ENCODE measurements at regions of chr2 and their contacts with region 1.

Region 1: DNA sequence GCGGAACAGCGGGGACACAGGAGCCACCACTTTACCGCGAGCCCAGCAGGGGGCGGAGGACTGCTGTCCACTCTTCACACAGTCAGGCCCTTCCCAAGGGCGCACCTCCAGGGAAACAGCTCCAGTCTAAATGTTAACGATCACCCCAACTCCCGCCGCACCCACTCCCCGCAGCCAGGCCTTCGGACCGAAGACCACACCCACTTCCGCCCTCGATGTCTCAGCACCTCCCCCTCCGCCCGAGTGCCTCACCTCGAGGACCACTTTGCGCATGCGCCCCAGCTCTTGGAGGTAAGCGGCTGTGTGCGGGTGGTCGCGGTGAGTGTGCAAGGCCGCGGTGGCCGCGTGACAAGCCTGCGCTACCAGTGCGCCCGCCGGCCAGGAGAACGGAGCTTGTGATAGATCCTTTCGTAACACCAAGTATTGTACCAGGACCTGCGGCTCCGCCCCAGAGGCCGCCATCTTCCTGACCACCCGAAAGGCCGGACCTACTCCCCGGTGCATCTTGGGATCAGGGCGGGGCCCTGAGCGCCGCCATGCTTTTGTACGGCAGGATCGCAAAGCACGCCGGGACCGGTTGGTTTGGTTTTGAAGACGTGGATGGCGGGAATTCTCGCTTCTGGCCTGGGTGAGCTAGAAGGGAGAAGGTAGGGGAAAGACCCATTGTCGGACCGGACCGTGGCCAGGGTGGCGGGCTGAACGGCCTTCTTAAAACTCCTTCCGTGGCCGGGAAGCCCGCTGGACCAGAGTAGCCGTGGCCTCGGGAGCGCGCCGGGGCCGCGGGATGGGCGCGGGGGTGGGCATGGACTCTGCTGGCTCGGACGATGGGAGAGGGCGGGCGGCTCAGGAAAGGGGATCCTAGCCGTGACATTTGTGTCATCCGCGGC is at the starts of genes CENPO and PTRHD1:
- DNase-seq: peak; percentile 93 to 95
- ATAC-seq: peak; percentile 97 to 98
- H3K4me3 ChIP-seq: peak within 1 kb of the TSS; percentile 67 to 94 (median 88)
- H3K27ac ChIP-seq: peak within 1 kb of the TSS; percentile 95 to 99 (median 98)
- H3K4me1 ChIP-seq: peaks cover 16 to 17% of the 10 kb centered on the region in 2 donors
- H3K27me3 ChIP-seq: no peaks in the 10 kb centered on the region
- CTCF ChIP-seq: peak; percentile 57 to 72 (median 66)
- POLR2A ChIP-seq: peak; percentile 31 to 36
- total RNA-seq, gene CENPO: 1.2 to 3.6 (median 2.7) TPM
- total RNA-seq, gene PTRHD1: 17.3 to 45.0 (median 37.3) TPM

Region 2: GRCh38 chr2:24123195-24123921 is 669.8 kb before region 1 on chr2 and contains the starts of genes FAM228B and PFN4:
- in situ Hi-C with region 1: no loop called
- intact Hi-C with region 1: no loop called
- DNase-seq: peak; percentile 85 to 88
- ATAC-seq: peak; percentile 93
- H3K4me3 ChIP-seq: peak within 1 kb of the TSS; percentile 80 to 94 (median 84)
- H3K27ac ChIP-seq: peak within 1 kb of the TSS; percentile 86 to 93 (median 91)
- H3K4me1 ChIP-seq: peaks cover 11 to 17% of the 10 kb centered on the region in 2 donors
- H3K27me3 ChIP-seq: no peaks in the 10 kb centered on the region
- CTCF ChIP-seq: no peak
- POLR2A ChIP-seq: peak; percentile 84 to 88
- total RNA-seq, gene FAM228B: 3.0 to 6.7 (median 4.3) TPM
- total RNA-seq, gene PFN4: not detected

Region 3: DNA sequence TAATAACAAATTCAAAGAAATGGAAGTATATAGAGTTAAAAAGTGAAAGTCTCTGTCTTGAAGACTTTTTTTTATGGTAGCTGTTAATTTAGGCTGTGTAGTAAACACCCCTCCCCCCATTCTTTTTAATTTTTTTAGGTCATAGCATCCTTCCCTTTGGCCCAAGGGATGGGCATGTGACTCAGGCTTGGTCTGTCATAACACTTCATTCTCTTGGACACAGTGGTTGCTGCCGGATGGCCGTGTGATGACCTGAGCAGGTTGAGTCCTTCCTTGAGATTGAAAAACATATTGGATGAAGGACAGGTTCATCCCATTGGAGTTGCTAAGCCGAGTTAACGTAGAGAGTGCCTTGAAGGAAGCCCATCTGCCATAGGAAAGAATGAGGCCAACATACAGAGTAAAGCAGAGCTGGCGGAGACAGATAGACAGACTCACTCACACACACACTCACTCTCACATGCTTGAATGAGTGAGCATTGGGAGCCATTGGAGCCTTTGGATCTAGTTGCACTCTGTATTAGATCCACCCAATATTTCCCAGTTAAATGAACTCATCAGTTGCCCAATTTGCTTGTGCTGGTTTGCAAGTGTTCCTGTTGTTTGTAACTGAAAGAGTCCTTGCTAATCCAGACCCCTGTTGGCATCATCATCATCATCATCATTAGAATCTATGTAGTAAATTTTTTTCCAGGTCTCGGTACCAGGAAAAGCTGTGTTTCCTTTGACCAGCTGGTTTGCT is 287.4 kb before region 1 on chr2:
- in situ Hi-C with region 1: no loop called
- intact Hi-C with region 1: no loop called
- DNase-seq: no peak
- ATAC-seq: no peak
- H3K4me3 ChIP-seq: no peak overlapping the region
- H3K27ac ChIP-seq: peak overlapping the region in 1 of 4 donors; percentile 25
- H3K4me1 ChIP-seq: peaks cover 77 to 79% of the 10 kb centered on the region in 2 donors
- H3K27me3 ChIP-seq: no peaks in the 10 kb centered on the region
- CTCF ChIP-seq: no peak
- POLR2A ChIP-seq: no peak

Region 4: GRCh38 chr2:24739354-24740025 is 53.6 kb before region 1 on chr2:
- in situ Hi-C with region 1: no loop called
- intact Hi-C with region 1: loop called (anchors 5 kb)
- DNase-seq: no peak
- ATAC-seq: peak; percentile 63
- H3K4me3 ChIP-seq: no peak overlapping the region
- H3K27ac ChIP-seq: peak overlapping the region; percentile 30 to 55 (median 38)
- H3K4me1 ChIP-seq: peaks cover 20 to 35% of the 10 kb centered on the region in 2 donors
- H3K27me3 ChIP-seq: no peaks in the 10 kb centered on the region
- CTCF ChIP-seq: no peak
- POLR2A ChIP-seq: no peak